ENCODE measurements at regions of chr3 and their contacts with region 1.

Region 1: DNA sequence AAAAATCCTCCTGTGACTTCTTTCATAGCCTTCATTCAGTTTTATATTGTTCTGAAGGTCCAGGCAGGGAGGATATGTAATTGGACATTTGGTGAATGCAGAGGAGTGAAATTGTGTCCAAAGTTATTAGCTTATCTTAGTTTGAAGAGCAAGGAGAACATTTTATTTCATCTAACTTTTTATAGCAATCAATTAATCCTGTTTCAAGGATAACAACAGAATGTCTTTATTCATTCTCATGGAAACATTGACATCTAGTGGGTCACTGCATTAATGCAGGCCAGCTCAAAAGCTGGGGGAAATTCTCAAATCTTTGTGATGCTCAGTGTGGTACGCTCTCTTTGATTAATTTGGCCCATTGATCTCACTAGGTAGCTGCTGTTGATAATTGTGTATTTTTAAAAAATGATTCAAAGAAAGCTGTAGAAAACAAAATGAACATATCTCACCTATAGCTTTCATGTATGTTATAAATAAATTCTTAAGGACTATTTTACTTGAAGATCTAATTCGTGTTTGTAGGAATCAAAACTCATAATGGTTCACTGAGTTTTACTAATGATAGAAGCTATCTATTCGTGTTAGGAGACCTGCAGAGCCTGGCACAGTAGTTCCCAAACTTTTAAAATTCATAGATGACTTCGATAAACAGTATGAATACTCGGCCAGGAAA is 150.8 kb upstream of the KCNMB2 start:
- DNase-seq: peak; percentile 51
- H3K4me3 Mint-ChIP-seq: no peak overlapping the region
- H3K27ac Mint-ChIP-seq: no peak overlapping the region
- H3K4me1 Mint-ChIP-seq: peaks cover 18% of the 10 kb centered on the region
- H3K27me3 Mint-ChIP-seq: no peaks in the 10 kb centered on the region
- CTCF ChIP-seq: peak; percentile 69

Region 2: GRCh38 chr3:176514297-176514696 is 1871.1 kb before region 1 on chr3:
- CTCF ChIA-PET with region 1: no interaction called
- POLR2A ChIA-PET with region 1: no interaction called
- intact Hi-C with region 1: loop called (anchors 5 kb)
- DNase-seq: peak; percentile 54
- H3K4me3 Mint-ChIP-seq: no peak overlapping the region
- H3K27ac Mint-ChIP-seq: no peak overlapping the region
- H3K4me1 Mint-ChIP-seq: no peaks in the 10 kb centered on the region
- H3K27me3 Mint-ChIP-seq: no peaks in the 10 kb centered on the region
- CTCF ChIP-seq: peak; percentile 69

Region 3: DNA sequence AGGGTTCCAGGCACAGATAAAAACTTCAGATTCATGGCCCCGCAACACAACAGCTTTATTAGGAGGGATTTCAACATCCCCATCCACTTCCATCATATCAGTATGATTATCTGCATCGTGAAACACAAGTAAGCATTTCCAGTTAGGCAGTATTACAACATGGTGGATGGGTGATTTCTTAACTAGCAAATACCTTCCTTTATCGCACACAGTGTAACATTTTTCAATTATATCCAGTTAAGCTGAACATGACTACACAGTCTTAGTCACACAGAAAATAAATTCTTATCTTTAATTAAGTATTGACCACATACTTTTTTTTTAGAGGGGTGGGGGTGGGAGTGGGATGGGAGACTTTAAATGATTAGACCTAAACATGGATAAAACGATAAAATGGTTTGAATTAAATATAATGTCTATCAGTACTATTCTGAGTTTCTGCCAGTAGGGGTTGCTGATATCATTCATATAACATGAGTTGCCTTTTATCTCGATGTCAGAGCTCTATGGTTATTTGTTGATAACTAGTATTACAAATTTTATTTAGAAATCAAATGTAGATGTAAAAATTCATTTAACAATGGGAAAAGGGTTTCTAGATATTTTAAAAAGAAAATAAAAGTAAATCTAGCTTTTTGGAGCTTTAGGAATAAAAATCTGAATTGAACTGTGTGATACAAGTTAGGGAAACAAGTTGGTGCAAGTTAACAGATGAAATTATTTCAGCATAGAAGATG is 1334.7 kb before region 1 on chr3:
- CTCF ChIA-PET with region 1: interaction called, 18 read pairs
- POLR2A ChIA-PET with region 1: interaction called, 4 read pairs
- intact Hi-C with region 1: loop called (anchors 2 kb)
- DNase-seq: peak; percentile 53
- H3K4me3 Mint-ChIP-seq: no peak overlapping the region
- H3K27ac Mint-ChIP-seq: no peak overlapping the region
- H3K4me1 Mint-ChIP-seq: peaks cover 5% of the 10 kb centered on the region
- H3K27me3 Mint-ChIP-seq: no peaks in the 10 kb centered on the region
- CTCF ChIP-seq: peak; percentile 52

Region 4: GRCh38 chr3:177960014-177960413 is 425.4 kb before region 1 on chr3:
- CTCF ChIA-PET with region 1: no interaction called
- POLR2A ChIA-PET with region 1: no interaction called
- intact Hi-C with region 1: no loop called
- DNase-seq: no peak
- H3K4me3 Mint-ChIP-seq: no peak overlapping the region
- H3K27ac Mint-ChIP-seq: no peak overlapping the region
- H3K4me1 Mint-ChIP-seq: peaks cover 7% of the 10 kb centered on the region
- H3K27me3 Mint-ChIP-seq: no peaks in the 10 kb centered on the region
- CTCF ChIP-seq: no peak

Region 5: DNA sequence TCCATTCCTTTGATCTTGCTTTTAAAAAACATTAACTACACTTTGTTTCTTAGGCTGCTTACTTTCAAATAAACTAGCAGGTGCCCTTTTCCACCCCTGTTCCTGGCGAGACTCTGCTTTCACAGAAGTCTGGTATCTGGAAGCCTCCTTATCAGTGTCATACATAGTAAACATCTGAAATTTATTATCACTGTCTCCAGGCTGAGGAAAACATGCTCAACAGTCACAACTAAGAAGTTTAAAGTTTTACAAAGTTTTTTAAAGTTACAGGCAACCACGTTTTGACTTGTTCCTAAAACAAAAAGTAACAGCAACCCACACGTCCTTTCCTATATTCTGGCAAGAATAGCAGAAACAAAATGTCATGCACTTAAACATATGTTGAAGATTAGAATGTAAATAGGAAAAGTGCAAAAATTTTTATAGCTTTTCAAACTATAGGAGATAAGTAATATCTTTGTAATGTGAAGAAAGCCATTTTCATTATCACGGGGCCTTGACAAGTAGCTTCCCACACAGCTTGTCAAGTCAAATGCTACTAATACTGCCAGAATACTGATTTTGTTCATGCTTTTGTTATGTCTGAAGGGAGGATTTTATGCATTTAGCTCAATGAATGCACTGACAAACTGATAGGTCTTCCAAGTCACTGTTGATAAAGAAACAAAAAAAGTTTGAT is 124.4 kb before region 1 on chr3:
- CTCF ChIA-PET with region 1: no interaction called
- POLR2A ChIA-PET with region 1: no interaction called
- intact Hi-C with region 1: no loop called
- DNase-seq: no peak
- H3K4me3 Mint-ChIP-seq: no peak overlapping the region
- H3K27ac Mint-ChIP-seq: no peak overlapping the region
- H3K4me1 Mint-ChIP-seq: no peaks in the 10 kb centered on the region
- H3K27me3 Mint-ChIP-seq: no peaks in the 10 kb centered on the region
- CTCF ChIP-seq: no peak